ENCODE measurements at regions of chr17 and their contacts with region 1.

Region 1: DNA sequence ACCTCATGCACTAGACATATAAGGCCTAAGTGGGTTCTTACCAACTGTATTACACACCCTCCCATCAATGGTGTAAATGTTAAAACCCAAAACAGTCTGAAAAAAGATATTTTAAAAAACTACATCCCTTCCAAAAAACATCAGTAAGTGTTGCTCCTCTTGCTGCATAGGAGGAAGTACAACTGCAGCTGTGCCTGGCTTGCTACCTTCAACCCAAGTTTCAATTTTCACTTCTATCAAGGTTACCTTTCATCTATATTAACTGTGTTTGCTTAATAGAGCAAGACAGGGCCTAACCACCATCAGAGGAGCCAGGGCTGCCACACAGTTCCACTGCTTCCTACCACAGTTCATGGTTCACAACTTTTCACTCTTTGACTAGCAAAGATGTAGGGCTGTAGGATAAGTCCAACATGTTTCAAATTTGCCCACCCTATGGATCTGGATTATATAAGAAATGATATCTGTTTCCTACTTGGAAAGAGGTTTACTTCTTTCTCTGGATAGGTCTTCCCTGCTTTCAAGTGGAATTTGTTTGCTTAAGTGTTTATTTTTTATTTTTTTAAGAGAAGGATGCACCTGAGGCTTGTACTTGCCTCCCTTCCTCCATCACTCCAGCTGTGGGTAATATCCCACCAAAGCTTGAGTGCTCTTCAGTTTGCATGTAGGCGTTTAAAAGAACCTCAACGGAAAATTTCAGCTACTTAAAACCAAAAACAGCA is 56.7 kb downstream of the GRB7 start:
- DNase-seq: peak; percentile 73
- H3K4me3 Mint-ChIP-seq: no peak overlapping the region
- H3K27ac Mint-ChIP-seq: no peak overlapping the region
- H3K4me1 Mint-ChIP-seq: no peaks in the 10 kb centered on the region
- H3K27me3 Mint-ChIP-seq: no peaks in the 10 kb centered on the region
- CTCF ChIP-seq: no peak

Region 2: GRCh38 chr17:39598047-39598481 is 196.3 kb before region 1 on chr17:
- CTCF ChIA-PET with region 1: no interaction called
- intact Hi-C with region 1: no loop called
- DNase-seq: peak; percentile 62
- H3K4me3 Mint-ChIP-seq: no peak overlapping the region
- H3K27ac Mint-ChIP-seq: no peak overlapping the region
- H3K4me1 Mint-ChIP-seq: peaks cover 7% of the 10 kb centered on the region
- H3K27me3 Mint-ChIP-seq: peaks cover 100% of the 10 kb centered on the region
- CTCF ChIP-seq: no peak

Region 3: DNA sequence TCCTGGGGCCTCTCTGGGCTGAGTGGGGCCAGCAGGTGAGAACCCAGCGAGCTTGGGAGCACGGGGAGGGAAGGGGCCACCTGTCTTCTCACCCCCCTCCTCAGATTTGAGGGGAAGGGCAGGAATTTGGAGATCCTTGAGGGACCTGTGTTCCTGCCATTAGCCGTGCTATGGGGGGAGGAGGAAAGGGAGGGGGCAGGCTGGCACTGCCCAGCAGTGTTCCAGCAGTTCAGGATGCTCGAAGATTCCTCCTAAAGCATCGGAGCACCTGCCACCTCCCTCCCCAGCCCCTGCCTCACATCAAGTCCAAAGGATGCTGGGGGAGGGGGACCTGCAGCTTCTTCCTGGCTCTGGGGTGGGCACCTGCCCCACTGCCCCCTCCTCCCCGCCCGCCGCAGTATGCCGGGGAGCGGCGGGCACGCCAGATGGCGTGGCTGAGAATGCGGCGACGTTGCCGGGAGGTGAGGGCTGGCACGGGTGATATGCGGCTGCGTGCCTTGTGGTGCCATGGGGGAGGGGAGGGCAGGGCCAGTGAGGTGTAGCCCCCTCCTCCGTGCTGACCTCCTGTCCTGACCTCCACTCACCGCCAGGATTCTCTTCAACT is 182.0 kb before region 1 on chr17:
- CTCF ChIA-PET with region 1: interaction called, 117 read pairs
- intact Hi-C with region 1: no loop called
- DNase-seq: no peak
- H3K4me3 Mint-ChIP-seq: no peak overlapping the region
- H3K27ac Mint-ChIP-seq: peak overlapping the region; percentile 2
- H3K4me1 Mint-ChIP-seq: peaks cover 20% of the 10 kb centered on the region
- H3K27me3 Mint-ChIP-seq: peaks cover 100% of the 10 kb centered on the region
- CTCF ChIP-seq: no peak

Region 4: DNA sequence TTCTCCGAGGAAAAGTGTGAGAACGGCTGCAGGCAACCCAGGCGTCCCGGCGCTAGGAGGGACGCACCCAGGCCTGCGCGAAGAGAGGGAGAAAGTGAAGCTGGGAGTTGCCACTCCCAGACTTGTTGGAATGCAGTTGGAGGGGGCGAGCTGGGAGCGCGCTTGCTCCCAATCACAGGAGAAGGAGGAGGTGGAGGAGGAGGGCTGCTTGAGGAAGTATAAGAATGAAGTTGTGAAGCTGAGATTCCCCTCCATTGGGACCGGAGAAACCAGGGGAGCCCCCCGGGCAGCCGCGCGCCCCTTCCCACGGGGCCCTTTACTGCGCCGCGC is 94.6 kb before region 1 on chr17 and contains the start of gene ERBB2:
- CTCF ChIA-PET with region 1: interaction called, 46 read pairs
- intact Hi-C with region 1: no loop called
- DNase-seq: peak; percentile 100
- H3K4me3 Mint-ChIP-seq: peak within 1 kb of the TSS; percentile 71
- H3K27ac Mint-ChIP-seq: peak within 1 kb of the TSS; percentile 67
- H3K4me1 Mint-ChIP-seq: peaks cover 68% of the 10 kb centered on the region
- H3K27me3 Mint-ChIP-seq: no peaks in the 10 kb centered on the region
- CTCF ChIP-seq: no peak
- total RNA-seq, gene ERBB2: 4,829 and 4,830 TPM in 2 replicates

Region 5: GRCh38 chr17:39763046-39763820 is 31.2 kb before region 1 on chr17:
- CTCF ChIA-PET with region 1: interaction called, 78 read pairs
- intact Hi-C with region 1: no loop called
- DNase-seq: no peak
- H3K4me3 Mint-ChIP-seq: no peak overlapping the region
- H3K27ac Mint-ChIP-seq: no peak overlapping the region
- H3K4me1 Mint-ChIP-seq: peaks cover 12% of the 10 kb centered on the region
- H3K27me3 Mint-ChIP-seq: peaks cover 26% of the 10 kb centered on the region
- CTCF ChIP-seq: no peak

Region 6: DNA sequence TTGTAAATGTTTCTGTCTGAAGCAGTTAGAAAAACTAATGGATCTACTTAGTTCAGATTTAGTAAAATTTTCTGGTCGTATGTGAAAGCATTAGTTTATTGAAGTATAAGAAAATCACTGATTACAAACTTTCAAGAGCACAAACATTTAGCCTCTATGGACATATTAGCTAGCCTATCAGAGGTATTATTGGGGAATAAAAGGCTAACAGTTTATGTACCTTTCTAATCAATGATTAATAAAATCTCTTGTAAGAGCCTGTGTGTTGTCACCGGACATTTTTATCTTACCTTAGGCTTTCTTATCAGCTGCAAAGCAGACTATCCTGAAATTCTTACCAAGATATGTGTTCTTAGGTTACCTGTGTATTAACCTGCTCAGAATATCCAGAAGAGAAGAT is 94.8 kb after region 1 on chr17:
- CTCF ChIA-PET with region 1: interaction called, 63 read pairs
- intact Hi-C with region 1: no loop called
- DNase-seq: peak; percentile 82
- H3K4me3 Mint-ChIP-seq: no peak overlapping the region
- H3K27ac Mint-ChIP-seq: no peak overlapping the region
- H3K4me1 Mint-ChIP-seq: peaks cover 26% of the 10 kb centered on the region
- H3K27me3 Mint-ChIP-seq: peaks cover 22% of the 10 kb centered on the region
- CTCF ChIP-seq: no peak

Region 7: DNA sequence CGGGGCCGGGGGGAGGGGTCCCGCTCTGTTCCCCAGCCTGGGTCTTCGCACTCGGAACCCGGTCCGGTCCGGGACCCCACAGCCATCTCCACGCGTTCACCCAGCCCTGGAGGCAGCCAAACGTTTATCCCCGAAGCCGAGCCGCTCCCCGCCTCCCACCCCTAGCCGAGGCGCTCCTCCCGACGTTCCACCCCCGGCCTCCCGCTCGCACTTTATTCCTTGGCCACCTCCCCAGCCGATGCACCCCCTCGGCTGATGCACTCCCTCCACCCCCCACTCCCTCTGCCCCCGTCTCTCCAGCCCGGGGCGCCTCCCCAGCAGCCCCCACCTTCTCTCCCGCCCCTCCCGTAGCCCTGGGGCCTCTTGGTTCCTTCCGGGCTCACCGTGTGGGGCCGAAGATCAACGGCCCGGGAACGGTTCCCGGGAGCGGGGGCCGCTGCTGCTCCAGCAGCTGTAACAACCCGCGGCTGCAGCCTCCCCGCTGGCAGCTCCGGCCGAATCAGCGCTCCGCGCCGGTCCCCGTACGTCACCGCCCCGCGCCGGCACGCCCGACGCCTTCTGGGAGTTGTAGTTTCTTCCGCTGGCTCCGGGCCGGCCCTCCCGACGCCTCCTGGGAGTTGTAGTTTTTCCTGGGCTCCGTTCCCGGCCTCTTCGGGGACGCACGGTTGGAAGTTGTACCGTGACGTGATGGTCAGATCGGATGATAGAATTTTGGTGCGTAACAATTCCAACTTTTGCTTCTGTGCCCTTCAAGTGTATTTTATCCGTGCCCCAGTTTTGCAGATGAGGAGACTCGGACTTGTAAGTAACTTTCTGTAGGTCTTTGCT is 132.9 kb after region 1 on chr17 and contains the starts of genes LRRC3C and ORMDL3:
- CTCF ChIA-PET with region 1: interaction called, 20 read pairs
- intact Hi-C with region 1: no loop called
- DNase-seq: no peak
- H3K4me3 Mint-ChIP-seq: peak within 1 kb of the TSS; percentile 74
- H3K27ac Mint-ChIP-seq: peak within 1 kb of the TSS; percentile 66
- H3K4me1 Mint-ChIP-seq: peaks cover 60% of the 10 kb centered on the region
- H3K27me3 Mint-ChIP-seq: no peaks in the 10 kb centered on the region
- CTCF ChIP-seq: no peak
- total RNA-seq, gene LRRC3C: not detected in 2 replicates
- total RNA-seq, gene ORMDL3: 1,738 and 1,968 TPM in 2 replicates